PC-3 (cell line): ENCODE measurements at regions of chr17 and their contacts with region 1.

Region 1: GRCh38 chr17:63842540-63843386 is at the start of gene SMARCD2:
- DNase-seq: peak; percentile 99
- ATAC-seq: peak; percentile 82
- H3K4me3 ChIP-seq: peak within 1 kb of the TSS; percentile 88
- H3K27ac ChIP-seq: peak within 1 kb of the TSS; percentile 19; the same call in 1 of the 2 replicates
- H3K4me1 ChIP-seq: peaks cover 33% of the 10 kb centered on the region
- H3K27me3 ChIP-seq: no peaks in the 10 kb centered on the region
- CTCF ChIP-seq: no peak
- total RNA-seq, gene SMARCD2: 152 and 156 TPM in 2 replicates

Region 2: DNA sequence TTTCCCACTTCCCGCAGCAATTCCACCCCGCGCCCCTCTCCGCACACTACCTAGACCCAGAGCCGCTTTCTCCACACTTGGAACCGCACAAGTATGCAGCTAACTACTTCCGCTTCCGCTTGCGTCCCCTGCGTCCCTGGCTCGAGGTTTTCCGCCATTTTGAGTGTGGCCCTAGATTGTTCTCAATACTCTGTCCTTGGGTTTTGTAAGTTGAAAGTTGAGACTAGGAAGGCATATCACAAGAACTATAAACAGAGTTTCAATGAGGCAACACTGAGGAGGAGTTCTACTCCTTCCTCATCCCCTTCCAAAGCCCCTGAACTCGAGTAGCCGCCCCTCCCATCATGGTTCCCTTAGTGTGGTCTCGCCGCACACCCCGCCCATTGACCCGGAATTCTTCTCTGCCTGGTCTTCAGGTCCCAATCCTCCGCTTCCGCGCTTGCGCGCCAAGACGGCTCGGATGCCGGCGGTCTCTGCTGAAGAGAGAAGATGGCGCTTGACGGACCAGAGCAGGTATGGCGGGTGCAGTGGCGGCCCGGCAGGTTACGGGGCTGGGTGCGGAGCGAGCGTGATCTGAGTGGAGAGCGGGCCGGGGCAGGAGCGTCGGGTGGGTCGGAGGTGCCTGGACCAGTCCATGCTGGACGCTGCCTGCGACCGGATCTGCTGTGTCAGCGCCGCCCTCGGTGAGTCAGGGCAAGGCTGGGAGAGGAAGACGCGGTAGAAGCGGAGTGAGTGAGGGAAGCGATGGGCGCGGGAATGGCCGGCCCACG is 15.6 kb before region 1 on chr17 and contains the starts of genes FTSJ3 and PSMC5:
- CTCF ChIA-PET with region 1: interaction called, 12 read pairs
- POLR2A ChIA-PET with region 1: no interaction called
- intact Hi-C with region 1: loop called (anchors 1 kb)
- DNase-seq: peak; percentile 97
- ATAC-seq: peak; percentile 91
- H3K4me3 ChIP-seq: peak within 1 kb of the TSS; percentile 89
- H3K27ac ChIP-seq: peak within 1 kb of the TSS; percentile 81
- H3K4me1 ChIP-seq: peaks cover 22% of the 10 kb centered on the region
- H3K27me3 ChIP-seq: no peaks in the 10 kb centered on the region
- CTCF ChIP-seq: peak; percentile 63
- total RNA-seq, gene FTSJ3: 82.4 and 112 TPM in 2 replicates
- total RNA-seq, gene PSMC5: 163 and 205 TPM in 2 replicates

Region 3: GRCh38 chr17:63881876-63882601 is 39.3 kb after region 1 on chr17 and contains the start of gene GH2:
- CTCF ChIA-PET with region 1: interaction called, 14 read pairs
- POLR2A ChIA-PET with region 1: no interaction called
- intact Hi-C with region 1: no loop called
- DNase-seq: peak; percentile 79
- ATAC-seq: peak; percentile 95
- H3K4me3 ChIP-seq: no peak within 1 kb of the TSS
- H3K27ac ChIP-seq: no peak within 1 kb of the TSS
- H3K4me1 ChIP-seq: no peaks in the 10 kb centered on the region
- H3K27me3 ChIP-seq: peaks cover 3% of the 10 kb centered on the region; the same call in 1 of the 2 replicates
- CTCF ChIP-seq: peak; percentile 62
- total RNA-seq, gene GH2: not detected in 2 replicates

Region 4: GRCh38 chr17:63919311-63919723 is 76.6 kb after region 1 on chr17:
- CTCF ChIA-PET with region 1: no interaction called
- POLR2A ChIA-PET with region 1: no interaction called
- intact Hi-C with region 1: no loop called
- DNase-seq: peak; percentile 76
- ATAC-seq: peak; percentile 95
- H3K4me3 ChIP-seq: no peak overlapping the region
- H3K27ac ChIP-seq: no peak overlapping the region
- H3K4me1 ChIP-seq: no peaks in the 10 kb centered on the region
- H3K27me3 ChIP-seq: peaks cover 14% of the 10 kb centered on the region; the same call in 1 of the 2 replicates
- CTCF ChIP-seq: peak; percentile 91